Activated naive CD4-positive, alpha-beta T cell treated with anti-CD3 and anti-CD28 coated beads for 36 hours (primary cell): ENCODE measurements at regions of chr18 and their contacts with region 1.

Region 1: DNA sequence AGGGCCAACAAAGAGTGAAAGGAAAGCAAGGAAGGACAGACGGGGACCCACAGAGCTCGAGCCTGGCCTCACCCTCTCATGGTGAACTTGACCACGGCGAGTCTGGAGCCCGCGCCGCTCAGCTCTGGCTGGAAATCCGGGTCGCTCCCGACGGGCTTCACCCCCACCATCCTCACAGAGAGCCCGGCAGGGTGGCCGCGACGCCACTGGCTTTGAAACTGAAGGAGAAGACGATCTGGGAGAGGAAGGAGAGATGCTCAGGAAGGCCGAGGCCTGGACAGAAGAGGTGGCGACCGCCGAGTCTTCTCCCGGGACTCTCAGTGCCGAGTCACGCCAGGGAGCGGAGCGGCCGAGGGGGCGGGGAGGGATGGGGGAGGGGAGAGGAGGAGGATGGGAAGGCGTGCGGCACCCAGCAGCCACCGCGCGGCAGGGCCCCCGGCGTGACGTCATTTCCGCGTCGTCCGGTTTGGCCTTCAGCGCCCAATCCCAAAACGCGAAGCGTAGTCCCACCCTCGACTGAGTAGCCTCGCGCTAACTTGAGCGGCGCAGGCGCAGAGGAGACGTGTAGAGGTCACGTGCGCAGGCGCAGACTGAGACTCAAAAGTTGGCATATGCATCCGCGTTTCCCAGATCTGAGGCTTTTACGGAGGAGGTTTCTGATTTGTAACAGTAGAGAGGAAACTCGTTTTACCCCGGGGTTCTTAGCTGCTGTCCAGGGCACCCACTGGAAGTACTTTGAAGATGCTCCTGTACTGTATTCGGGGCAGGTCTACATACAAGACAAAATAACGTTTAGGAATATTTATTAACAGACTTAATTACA is at the start of gene TXNL1:
- DNase-seq: peak; percentile 99
- H3K4me3 Mint-ChIP-seq: peak within 1 kb of the TSS; percentile 90
- H3K27ac Mint-ChIP-seq: peak within 1 kb of the TSS; percentile 95
- H3K4me1 Mint-ChIP-seq: peaks cover 38% of the 10 kb centered on the region
- H3K27me3 Mint-ChIP-seq: no peaks in the 10 kb centered on the region
- total RNA-seq, gene TXNL1: 64.1 to 68.6 TPM

Region 2: DNA sequence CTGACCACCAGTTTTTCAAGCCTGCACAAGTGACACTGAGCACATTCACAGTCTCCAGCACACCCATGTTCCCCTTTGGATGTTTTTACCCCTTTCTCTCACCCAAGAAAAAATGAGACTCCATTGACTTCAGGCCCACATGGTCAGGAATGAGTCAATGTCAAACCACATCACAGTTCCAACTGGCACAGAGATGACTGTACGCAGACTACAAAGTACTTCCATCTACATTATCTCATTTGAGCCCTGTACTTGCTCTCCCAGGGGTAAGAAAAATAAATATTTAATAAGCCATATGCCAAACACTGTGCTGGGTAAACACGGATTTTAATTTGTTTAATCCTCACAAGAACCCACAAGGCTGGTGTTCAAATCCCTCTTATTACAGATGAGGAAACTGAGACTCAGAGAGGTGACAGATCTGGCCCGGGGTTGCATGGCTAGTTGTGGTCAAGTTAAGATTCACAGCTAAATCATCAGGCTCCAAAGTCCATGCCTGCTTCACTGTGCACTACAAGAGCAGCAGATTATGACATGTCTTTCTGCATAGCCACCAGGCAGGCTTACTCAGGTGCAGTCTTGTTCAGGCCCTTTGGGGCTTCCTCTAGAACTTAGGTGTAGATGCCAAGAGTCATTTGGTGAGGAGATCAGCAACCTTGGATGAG is 106.2 kb before region 1 on chr18:
- CTCF ChIA-PET with region 1: no interaction called
- intact Hi-C with region 1: no loop called
- DNase-seq: peak; percentile 42
- H3K4me3 Mint-ChIP-seq: no peak overlapping the region
- H3K27ac Mint-ChIP-seq: no peak overlapping the region
- H3K4me1 Mint-ChIP-seq: peaks cover 2% of the 10 kb centered on the region
- H3K27me3 Mint-ChIP-seq: peaks cover 7% of the 10 kb centered on the region

Region 3: DNA sequence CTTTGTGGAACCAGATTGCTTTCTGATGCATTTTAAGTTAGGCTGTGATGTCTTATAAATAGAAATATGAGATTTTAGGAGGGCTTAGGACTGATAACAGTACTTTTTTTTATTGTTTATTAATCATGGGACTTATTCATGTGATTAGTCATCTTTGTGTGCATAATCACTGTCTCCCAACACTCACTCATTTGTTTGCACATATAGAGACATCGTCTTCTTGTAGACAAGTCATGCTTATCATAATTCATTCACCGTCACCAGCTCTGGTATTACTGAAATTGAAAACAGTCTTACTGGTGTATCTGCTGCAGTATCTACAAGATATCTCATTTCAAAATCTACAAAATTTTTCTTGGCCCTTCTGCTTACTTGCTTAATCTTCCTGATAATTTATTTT is 58.5 kb after region 1 on chr18:
- CTCF ChIA-PET with region 1: no interaction called
- intact Hi-C with region 1: no loop called
- DNase-seq: no peak
- H3K4me3 Mint-ChIP-seq: no peak overlapping the region
- H3K27ac Mint-ChIP-seq: no peak overlapping the region
- H3K4me1 Mint-ChIP-seq: no peaks in the 10 kb centered on the region
- H3K27me3 Mint-ChIP-seq: no peaks in the 10 kb centered on the region

Region 4: GRCh38 chr18:56890632-56891031 is 252.2 kb after region 1 on chr18:
- CTCF ChIA-PET with region 1: no interaction called
- intact Hi-C with region 1: no loop called
- DNase-seq: no peak
- H3K4me3 Mint-ChIP-seq: no peak overlapping the region
- H3K27ac Mint-ChIP-seq: no peak overlapping the region
- H3K4me1 Mint-ChIP-seq: no peaks in the 10 kb centered on the region
- H3K27me3 Mint-ChIP-seq: no peaks in the 10 kb centered on the region

Region 5: GRCh38 chr18:57015451-57015850 is 377.0 kb after region 1 on chr18:
- CTCF ChIA-PET with region 1: no interaction called
- intact Hi-C with region 1: loop called (anchors 1 kb)
- DNase-seq: no peak
- H3K4me3 Mint-ChIP-seq: no peak overlapping the region
- H3K27ac Mint-ChIP-seq: no peak overlapping the region
- H3K4me1 Mint-ChIP-seq: peaks cover 23% of the 10 kb centered on the region
- H3K27me3 Mint-ChIP-seq: no peaks in the 10 kb centered on the region

Region 6: DNA sequence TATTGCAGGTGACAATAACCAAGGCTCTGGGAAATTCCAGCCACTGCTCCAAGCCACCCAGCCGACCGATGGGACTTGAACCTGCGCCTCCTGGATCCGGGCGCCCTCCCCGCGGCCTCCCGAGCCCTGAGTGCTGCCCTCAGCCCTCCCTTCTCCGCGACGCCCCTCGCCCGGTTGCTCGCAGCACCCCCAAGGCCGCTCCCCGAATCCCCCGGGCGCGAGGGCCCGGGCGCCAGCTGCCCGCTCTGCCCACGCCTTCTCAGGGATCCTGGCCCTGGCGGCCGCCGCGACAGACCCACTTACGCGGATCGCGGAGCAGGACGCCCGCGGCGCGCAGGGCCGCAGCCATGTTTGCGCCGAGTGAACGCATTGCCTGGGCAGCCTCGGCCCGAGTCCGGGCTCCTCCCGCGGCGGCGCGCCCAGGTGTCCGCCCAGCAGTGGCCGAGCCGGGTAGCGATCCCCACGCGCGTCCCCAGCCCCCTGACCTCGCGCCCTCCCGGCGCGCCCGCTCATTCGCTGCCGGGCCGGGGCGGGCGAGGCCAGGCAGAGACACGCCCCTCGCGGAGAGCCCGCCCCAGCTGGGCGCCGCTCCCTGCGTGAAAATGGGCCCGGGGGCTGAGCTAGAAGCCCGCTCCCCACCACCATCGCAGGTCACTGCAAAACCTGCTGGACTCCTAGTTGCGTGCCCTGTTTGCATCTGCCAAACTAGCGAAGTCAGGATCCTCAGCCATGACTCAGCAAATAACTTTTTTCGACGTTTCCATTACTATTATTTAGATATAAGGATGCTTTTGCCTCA is 948.0 kb after region 1 on chr18 and contains the start of gene FECH:
- CTCF ChIA-PET with region 1: no interaction called
- intact Hi-C with region 1: loop called (anchors 5 kb)
- DNase-seq: peak; percentile 58
- H3K4me3 Mint-ChIP-seq: peak within 1 kb of the TSS; percentile 83
- H3K27ac Mint-ChIP-seq: peak within 1 kb of the TSS; percentile 56
- H3K4me1 Mint-ChIP-seq: peaks cover 20% of the 10 kb centered on the region
- H3K27me3 Mint-ChIP-seq: no peaks in the 10 kb centered on the region
- total RNA-seq, gene FECH: 18.8 to 19.2 TPM